Activated B cell treated with CpG ODN at 0.5 μM for 24 hours (primary cell): ENCODE measurements at regions of chr14 and their contacts with region 1.

Region 1: DNA sequence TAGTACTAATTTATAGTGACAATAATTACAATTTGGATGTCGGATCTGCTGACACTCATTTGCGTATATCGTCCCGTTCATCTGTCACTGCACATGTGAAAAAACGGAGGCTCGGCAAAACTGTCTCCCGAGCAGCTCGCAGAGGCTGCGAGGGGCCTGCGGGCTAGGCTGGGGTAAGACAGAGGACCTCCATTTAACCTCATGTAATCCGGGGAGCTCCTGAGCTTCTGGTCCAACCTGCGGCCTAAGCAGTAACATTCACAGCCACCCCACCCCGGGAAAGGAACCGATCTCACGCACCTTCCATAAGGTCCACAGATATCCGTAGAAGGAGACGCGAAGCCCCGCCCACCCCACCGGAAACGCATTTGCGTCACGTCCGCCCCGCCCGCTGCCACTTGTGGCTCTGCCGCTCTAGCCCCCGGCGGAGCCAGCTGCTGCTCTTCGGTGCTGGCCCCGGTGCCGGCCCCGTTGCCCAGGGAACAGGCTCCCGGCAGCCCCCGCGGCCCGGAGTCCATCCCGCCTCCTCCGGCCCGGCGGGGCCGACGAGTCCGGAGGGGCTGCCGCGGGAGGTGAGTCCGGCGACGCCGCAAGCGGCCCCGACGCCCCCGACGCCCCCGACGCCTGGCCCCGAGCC is at the starts of genes CINP and TECPR2:
- DNase-seq: peak; percentile 92
- ATAC-seq: peak; percentile 82
- H3K4me3 Mint-ChIP-seq: no peak within 1 kb of the TSS
- H3K27ac Mint-ChIP-seq: peak within 1 kb of the TSS; percentile 97
- H3K4me1 Mint-ChIP-seq: peaks cover 35% of the 10 kb centered on the region
- H3K27me3 Mint-ChIP-seq: no peaks in the 10 kb centered on the region
- CTCF ChIP-seq: no peak
- total RNA-seq, gene CINP: 48.6 and 57.5 TPM in 2 replicates
- total RNA-seq, gene TECPR2: 9.9 and 11.8 TPM in 2 replicates

Region 2: DNA sequence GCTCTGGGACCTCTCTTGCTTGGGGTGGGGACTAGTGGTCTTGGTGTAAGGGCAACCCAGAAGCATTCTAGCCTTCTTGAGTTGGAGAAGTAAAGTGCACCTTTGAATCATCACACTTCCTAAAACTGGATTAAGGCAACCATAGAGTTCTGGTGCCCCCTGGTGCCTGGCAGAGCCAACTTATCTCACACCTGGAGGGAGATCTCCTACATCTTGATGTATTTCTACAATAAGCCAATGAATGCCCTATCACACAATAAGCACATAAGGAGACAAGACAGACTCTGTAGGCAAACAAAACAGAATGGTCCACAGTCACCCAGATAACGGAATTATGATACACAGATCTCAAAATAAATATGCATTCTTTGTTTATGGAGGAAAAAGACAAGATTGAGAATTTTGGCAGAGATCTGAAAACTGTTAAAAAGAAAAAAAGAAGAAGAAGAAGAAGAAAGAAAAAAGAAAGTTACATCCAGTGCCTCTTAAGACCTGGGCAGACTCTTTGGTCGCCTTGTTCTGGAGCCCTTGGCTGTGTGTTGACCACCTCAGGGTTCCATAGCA is 697.1 kb before region 1 on chr14:
- CTCF ChIA-PET with region 1: no interaction called
- POLR2A ChIA-PET with region 1: no interaction called
- intact Hi-C with region 1: no loop called
- DNase-seq: no peak
- ATAC-seq: peak; percentile 31
- H3K4me3 Mint-ChIP-seq: no peak overlapping the region
- H3K27ac Mint-ChIP-seq: no peak overlapping the region
- H3K4me1 Mint-ChIP-seq: no peaks in the 10 kb centered on the region
- H3K27me3 Mint-ChIP-seq: peaks cover 28% of the 10 kb centered on the region
- CTCF ChIP-seq: no peak

Region 3: GRCh38 chr14:101947906-101948665 is 414.6 kb before region 1 on chr14:
- CTCF ChIA-PET with region 1: no interaction called
- POLR2A ChIA-PET with region 1: no interaction called
- intact Hi-C with region 1: loop called (anchors 1 kb)
- DNase-seq: peak; percentile 98
- ATAC-seq: peak; percentile 95
- H3K4me3 Mint-ChIP-seq: peak overlapping the region; percentile 93
- H3K27ac Mint-ChIP-seq: peak overlapping the region; percentile 97
- H3K4me1 Mint-ChIP-seq: peaks cover 19% of the 10 kb centered on the region
- H3K27me3 Mint-ChIP-seq: peaks cover 22% of the 10 kb centered on the region
- CTCF ChIP-seq: no peak

Region 4: DNA sequence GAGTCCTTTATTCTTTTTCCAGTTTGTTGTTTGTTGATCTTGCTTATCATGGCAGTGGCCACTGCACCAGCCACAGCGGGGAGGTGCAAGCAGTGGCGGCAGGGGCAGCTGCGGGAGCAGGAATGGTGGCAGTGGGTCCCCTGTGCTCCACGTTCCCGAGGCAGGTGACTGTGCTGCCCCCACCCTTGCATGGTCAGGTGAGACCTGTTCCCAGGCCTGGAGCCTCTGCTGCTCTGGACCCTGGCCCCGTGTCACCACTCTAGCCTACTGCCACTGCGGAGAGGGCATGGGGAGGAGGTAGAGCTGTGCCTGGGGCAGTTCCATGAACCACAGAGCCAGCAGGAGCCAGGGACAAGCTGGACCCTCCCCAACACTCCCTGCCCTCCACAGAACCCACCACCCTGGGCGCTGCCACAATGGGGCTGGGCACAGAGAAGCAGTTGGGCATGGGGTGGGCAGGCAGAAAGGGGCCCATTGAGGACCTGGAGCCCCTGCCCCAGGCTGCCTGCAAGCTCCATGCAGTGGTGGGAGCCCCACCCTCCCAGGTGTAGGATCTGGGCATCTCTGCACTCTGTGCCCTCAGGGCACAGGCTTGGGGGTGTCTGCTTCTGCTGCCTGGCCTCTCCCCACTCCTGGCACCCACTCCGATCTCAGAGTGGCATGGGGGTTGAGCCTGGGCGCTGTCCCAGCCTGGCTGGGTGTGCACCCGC is 246.1 kb before region 1 on chr14:
- CTCF ChIA-PET with region 1: no interaction called
- POLR2A ChIA-PET with region 1: no interaction called
- intact Hi-C with region 1: no loop called
- DNase-seq: no peak
- ATAC-seq: no peak
- H3K4me3 Mint-ChIP-seq: no peak overlapping the region
- H3K27ac Mint-ChIP-seq: no peak overlapping the region
- H3K4me1 Mint-ChIP-seq: no peaks in the 10 kb centered on the region
- H3K27me3 Mint-ChIP-seq: no peaks in the 10 kb centered on the region
- CTCF ChIP-seq: no peak

Region 5: DNA sequence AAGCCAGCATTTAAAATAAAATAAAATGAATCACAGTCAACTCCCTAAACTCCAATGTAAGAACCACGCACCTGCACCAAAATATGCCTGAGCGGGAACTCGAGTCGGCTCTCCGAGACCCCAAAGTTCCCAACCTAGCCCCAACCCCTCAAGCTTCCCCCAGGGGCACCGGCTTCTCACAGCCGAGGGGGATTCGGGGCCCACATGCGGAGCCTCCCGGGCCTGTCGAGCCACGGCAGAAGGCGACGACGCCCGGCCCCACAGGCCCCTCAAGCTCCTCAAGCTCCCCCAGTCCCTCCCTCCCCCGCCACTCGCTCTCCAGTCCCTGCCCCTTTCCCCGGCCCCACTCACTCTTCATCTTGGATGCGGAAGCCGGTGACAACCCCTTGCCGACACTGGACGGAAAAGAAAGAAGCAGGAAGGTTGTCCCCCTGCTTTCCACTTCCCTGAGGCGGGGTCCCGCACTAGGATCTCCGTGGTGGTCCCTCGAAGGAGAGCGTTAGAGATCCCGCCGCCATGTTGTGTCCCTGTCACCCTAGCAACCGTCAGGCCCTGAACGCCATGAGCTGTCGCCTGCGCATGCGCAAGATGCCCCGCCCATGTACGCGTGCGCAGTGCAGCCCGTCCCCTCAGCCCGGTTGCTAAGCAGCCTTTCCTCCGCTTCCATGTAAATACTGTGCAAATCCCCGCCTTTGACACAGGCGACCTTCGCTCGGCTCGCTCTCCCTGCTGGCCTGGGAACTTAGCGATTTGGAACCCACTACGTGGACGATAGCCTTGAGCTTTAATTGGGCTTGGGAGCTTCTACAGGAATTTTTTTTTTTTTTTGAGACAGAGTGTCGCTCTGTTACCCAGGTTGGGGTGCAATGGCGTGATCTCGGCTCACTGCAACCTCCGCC is 57.8 kb before region 1 on chr14 and contains the start of gene MOK:
- CTCF ChIA-PET with region 1: no interaction called
- POLR2A ChIA-PET with region 1: no interaction called
- intact Hi-C with region 1: loop called (anchors 1 kb)
- DNase-seq: peak; percentile 99
- ATAC-seq: peak; percentile 88
- H3K4me3 Mint-ChIP-seq: peak within 1 kb of the TSS; percentile 96
- H3K27ac Mint-ChIP-seq: peak within 1 kb of the TSS; percentile 95
- H3K4me1 Mint-ChIP-seq: peaks cover 9% of the 10 kb centered on the region
- H3K27me3 Mint-ChIP-seq: peaks cover 4% of the 10 kb centered on the region
- CTCF ChIP-seq: no peak
- total RNA-seq, gene MOK: 1.8 and 3.1 TPM in 2 replicates

Region 6: DNA sequence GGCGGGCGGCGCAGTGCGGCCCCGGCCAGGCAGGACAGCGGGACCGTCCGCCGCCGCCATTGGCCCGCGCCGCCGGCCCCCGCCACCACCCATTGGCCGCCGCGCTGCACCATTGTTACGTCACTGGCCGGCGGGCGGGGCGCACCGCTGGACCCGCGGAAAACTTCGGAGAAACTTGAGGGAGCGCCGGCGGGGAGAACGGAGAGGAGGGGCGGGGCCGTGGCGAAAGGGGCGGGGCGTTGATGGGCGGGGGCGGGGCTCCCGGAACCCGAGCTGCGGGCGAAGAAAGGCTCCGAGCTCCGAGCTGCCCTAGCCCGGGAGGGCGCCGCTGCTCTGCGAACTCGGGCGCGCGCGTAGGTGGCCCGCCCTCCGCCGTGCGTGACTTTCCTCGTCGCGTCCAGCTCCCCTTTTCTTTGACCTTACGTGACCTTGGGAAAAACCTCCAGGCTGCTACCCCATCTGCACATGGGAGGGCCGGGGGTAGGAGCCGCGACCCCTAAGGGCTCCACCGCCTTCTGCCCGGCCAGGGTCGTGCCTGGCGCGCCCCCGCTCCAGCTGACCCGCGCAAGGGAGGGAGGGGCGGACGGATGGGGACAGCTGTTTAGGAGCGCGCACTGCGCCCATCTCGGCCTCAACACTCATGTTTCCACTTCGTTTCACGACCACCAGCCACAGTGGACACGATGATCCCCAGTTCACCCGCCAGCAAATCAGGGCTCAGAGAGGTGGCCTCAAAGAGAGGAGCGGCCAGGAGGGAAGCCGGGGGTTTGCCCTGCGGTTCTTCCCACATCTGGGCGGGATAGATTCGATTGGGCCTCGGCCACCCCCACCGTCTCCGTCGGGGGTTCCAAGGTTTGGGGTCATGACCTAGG is 147.3 kb after region 1 on chr14 and contains the start of gene ANKRD9:
- CTCF ChIA-PET with region 1: no interaction called
- POLR2A ChIA-PET with region 1: interaction called, 4 read pairs
- intact Hi-C with region 1: loop called (anchors 2 kb)
- DNase-seq: peak; percentile 81
- ATAC-seq: peak; percentile 82
- H3K4me3 Mint-ChIP-seq: peak within 1 kb of the TSS; percentile 82
- H3K27ac Mint-ChIP-seq: no peak within 1 kb of the TSS
- H3K4me1 Mint-ChIP-seq: peaks cover 11% of the 10 kb centered on the region
- H3K27me3 Mint-ChIP-seq: peaks cover 3% of the 10 kb centered on the region
- CTCF ChIP-seq: no peak
- total RNA-seq, gene ANKRD9: 1.4 and 1.8 TPM in 2 replicates

Region 7: GRCh38 chr14:103057365-103058096 is 694.9 kb after region 1 on chr14 and contains the start of gene CDC42BPB:
- CTCF ChIA-PET with region 1: no interaction called
- POLR2A ChIA-PET with region 1: no interaction called
- intact Hi-C with region 1: loop called (anchors 10 kb)
- DNase-seq: peak; percentile 82
- ATAC-seq: peak; percentile 89
- H3K4me3 Mint-ChIP-seq: peak within 1 kb of the TSS; percentile 87
- H3K27ac Mint-ChIP-seq: no peak within 1 kb of the TSS
- H3K4me1 Mint-ChIP-seq: peaks cover 32% of the 10 kb centered on the region
- H3K27me3 Mint-ChIP-seq: peaks cover 2% of the 10 kb centered on the region
- CTCF ChIP-seq: no peak
- total RNA-seq, gene CDC42BPB: 34.2 and 38.5 TPM in 2 replicates